ENCODE measurements at regions of chr5 and their contacts with region 1.

Region 1: GRCh38 chr5:10701567-10702039 is 59.4 kb downstream of the DAP start:
- DNase-seq: no peak
- H3K4me3 ChIP-seq: no peak overlapping the region
- H3K27me3 ChIP-seq: no peaks in the 10 kb centered on the region
- CTCF ChIP-seq: peak; percentile 63

Region 2: GRCh38 chr5:9239626-9240025 is 1462.0 kb before region 1 on chr5:
- CTCF ChIA-PET with region 1: no interaction called
- POLR2A ChIA-PET with region 1: no interaction called
- DNase-seq: no peak
- H3K4me3 ChIP-seq: no peak overlapping the region
- H3K27me3 ChIP-seq: no peaks in the 10 kb centered on the region
- CTCF ChIP-seq: no peak

Region 3: GRCh38 chr5:10689391-10690081 is 12.1 kb before region 1 on chr5:
- CTCF ChIA-PET with region 1: interaction called, 22 read pairs
- POLR2A ChIA-PET with region 1: no interaction called
- DNase-seq: no peak
- H3K4me3 ChIP-seq: no peak overlapping the region
- H3K27me3 ChIP-seq: no peaks in the 10 kb centered on the region
- CTCF ChIP-seq: peak; percentile 40